ENCODE measurements at regions of chr20 and their contacts with region 1.

Region 1: GRCh38 chr20:5596401-5597193 is 153.6 kb upstream of the SHLD1 start:
- DNase-seq: no peak
- ATAC-seq: no peak
- H3K4me3 ChIP-seq: no peak overlapping the region
- H3K27ac ChIP-seq: no peak overlapping the region
- H3K4me1 ChIP-seq: no peaks in the 10 kb centered on the region
- H3K27me3 ChIP-seq: no peaks in the 10 kb centered on the region
- CTCF ChIP-seq: no peak

Region 2: DNA sequence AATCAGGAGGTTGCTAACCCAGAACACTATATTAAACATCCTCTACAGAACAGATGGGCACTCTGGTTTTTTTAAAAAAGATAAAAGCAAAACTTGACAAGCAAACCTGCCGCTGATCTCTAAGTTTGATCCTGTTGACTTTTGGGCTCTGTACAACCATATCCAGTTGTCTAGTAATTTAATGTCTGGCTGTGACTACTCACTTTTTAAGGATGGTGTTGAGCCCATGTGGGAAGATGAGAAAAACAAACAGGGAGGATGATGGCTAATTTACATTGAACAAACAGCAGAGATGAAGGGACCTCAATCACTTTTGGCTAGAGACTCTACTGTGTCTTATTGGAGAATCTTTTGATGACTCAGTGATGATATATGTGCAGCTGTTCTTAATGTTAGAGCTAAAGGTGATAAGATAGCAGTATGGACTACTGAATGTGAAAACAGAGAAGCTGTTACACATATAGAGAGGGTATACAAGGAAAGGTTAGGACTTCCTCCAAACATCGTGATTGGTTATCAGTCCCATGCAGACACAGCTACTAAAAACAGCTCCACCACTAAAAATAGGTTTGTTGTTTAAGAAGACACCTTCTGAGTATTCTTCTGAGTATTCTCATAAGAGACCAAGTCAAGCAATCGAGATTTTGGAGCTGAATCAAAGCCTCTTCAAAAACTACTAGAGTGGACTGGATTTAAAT is 47.5 kb before region 1 on chr20:
- intact Hi-C with region 1: loop called in 1 of 2 experiments (anchors 10 kb)
- DNase-seq: no peak
- ATAC-seq: no peak
- H3K4me3 ChIP-seq: no peak overlapping the region
- H3K27ac ChIP-seq: no peak overlapping the region
- H3K4me1 ChIP-seq: no peaks in the 10 kb centered on the region
- H3K27me3 ChIP-seq: no peaks in the 10 kb centered on the region
- CTCF ChIP-seq: no peak

Region 3: GRCh38 chr20:5633751-5634365 is 37.3 kb after region 1 on chr20:
- intact Hi-C with region 1: no loop called
- DNase-seq: no peak
- ATAC-seq: no peak
- H3K4me3 ChIP-seq: no peak overlapping the region
- H3K27ac ChIP-seq: no peak overlapping the region
- H3K4me1 ChIP-seq: no peaks in the 10 kb centered on the region
- H3K27me3 ChIP-seq: no peaks in the 10 kb centered on the region
- CTCF ChIP-seq: no peak